Sigmoid colon (tissue), 7 donors: ENCODE measurements at regions of chr16 and their contacts with region 1.

Region 1: DNA sequence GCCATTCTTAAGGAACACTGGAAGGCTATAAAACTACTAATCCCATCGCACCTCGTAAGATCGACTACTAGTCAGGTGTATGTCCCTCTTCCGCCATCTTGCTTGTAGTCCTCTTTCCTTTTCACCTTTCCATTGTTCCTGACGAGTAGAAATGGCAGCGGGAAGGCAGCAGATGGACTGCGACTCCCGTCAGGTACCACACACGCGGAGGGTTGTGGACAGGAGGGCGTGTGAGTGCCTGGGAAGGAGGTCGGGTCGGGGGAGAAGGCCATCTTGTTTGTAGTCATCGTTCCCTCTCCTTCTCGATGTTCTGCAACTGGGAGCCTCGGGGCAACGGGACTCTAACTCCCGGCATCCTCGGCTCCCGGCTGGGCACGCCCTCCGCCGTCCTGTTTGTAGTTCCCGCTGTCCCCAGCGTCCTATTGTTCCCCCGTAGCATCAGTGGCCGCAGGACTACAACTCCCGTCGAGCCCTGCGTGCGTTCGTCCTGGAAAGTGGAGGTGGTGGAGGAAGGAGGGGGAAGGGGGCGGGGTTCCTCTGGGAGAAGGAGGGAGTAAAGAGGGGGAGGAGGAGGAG is 324 bp upstream of the FBXL19 start:
- DNase-seq: peak; percentile 100
- H3K4me3 ChIP-seq: peak overlapping the region; percentile 69 to 90 (median 80)
- H3K27ac ChIP-seq: peak overlapping the region; percentile 87 to 95 (median 92)
- H3K4me1 ChIP-seq: peaks cover 0 to 40% (median 37%) of the 10 kb centered on the region in 4 donors
- H3K27me3 ChIP-seq: no peaks in the 10 kb centered on the region
- CTCF ChIP-seq: no peak
- EP300 ChIP-seq: no peak
- POLR2A ChIP-seq: no peak

Region 2: DNA sequence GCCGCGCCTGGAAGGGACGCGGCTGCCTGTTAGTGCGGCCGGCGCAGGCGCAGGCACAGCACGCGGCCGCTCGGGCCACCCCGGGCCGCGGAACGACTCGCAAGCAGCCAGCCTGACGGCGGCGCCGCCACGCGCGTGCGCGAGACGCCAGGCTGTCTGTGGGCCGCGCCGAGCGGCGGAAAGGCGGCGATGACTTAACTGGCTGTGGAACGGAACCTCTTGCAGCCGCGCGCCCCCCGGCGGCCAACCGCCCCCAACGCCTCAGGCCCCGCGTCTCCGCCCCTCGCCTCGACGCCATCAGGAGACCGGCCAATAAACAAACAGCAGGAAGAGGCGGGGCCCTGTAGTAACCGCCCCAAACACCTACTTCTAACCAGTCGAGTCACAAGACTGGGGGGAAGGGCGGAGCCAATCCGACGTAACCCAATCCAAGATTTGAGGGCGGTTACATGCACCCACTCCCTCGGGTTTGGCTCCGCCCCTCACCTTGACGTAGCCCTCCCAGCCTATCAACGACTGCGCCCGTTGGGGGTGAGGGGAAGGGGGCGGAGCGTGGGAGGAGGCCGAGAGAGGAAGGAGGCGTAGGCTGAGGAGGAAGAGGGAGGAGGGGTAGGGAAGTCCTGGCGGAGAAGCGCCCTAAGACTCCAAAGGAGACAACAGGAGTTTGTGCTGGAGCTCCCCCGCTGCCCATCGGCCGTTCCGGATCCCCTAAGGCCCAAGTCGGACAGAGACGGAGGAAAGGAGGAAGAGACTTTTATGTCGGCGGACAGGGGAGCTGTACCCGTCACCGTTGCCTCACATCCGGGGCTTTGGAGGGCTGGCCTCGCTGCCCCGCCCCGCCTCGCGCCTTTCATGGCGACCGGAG is 264.9 kb before region 1 on chr16 and contains the start of gene FBRS:
- intact Hi-C with region 1: loop called (anchors 10 kb)
- DNase-seq: peak; percentile 100
- H3K4me3 ChIP-seq: peak within 1 kb of the TSS; percentile 91 to 99 (median 97)
- H3K27ac ChIP-seq: peak within 1 kb of the TSS; percentile 96 to 98 (median 97)
- H3K4me1 ChIP-seq: peaks cover 0 to 58% (median 53%) of the 10 kb centered on the region in 4 donors
- H3K27me3 ChIP-seq: no peaks in the 10 kb centered on the region
- CTCF ChIP-seq: peak in 3 of 4 experiments; percentile 8 to 66 (median 38)
- EP300 ChIP-seq: peak in 2 of 4 donors; percentile 49 to 52
- POLR2A ChIP-seq: peak; percentile 78 to 94
- total RNA-seq, gene FBRS: 12.5 to 29.6 (median 22.7) TPM

Region 3: GRCh38 chr16:30698139-30698815 is 224.8 kb before region 1 on chr16:
- intact Hi-C with region 1: loop called (anchors 2 kb)
- DNase-seq: peak; percentile 98
- H3K4me3 ChIP-seq: peak overlapping the region; percentile 92 to 100 (median 100)
- H3K27ac ChIP-seq: peak overlapping the region; percentile 97 to 100 (median 100)
- H3K4me1 ChIP-seq: peaks cover 0 to 32% (median 23%) of the 10 kb centered on the region in 4 donors
- H3K27me3 ChIP-seq: no peaks in the 10 kb centered on the region
- CTCF ChIP-seq: no peak
- EP300 ChIP-seq: peak in 1 of 4 donors; percentile 48
- POLR2A ChIP-seq: peak; percentile 0 to 69

Region 4: DNA sequence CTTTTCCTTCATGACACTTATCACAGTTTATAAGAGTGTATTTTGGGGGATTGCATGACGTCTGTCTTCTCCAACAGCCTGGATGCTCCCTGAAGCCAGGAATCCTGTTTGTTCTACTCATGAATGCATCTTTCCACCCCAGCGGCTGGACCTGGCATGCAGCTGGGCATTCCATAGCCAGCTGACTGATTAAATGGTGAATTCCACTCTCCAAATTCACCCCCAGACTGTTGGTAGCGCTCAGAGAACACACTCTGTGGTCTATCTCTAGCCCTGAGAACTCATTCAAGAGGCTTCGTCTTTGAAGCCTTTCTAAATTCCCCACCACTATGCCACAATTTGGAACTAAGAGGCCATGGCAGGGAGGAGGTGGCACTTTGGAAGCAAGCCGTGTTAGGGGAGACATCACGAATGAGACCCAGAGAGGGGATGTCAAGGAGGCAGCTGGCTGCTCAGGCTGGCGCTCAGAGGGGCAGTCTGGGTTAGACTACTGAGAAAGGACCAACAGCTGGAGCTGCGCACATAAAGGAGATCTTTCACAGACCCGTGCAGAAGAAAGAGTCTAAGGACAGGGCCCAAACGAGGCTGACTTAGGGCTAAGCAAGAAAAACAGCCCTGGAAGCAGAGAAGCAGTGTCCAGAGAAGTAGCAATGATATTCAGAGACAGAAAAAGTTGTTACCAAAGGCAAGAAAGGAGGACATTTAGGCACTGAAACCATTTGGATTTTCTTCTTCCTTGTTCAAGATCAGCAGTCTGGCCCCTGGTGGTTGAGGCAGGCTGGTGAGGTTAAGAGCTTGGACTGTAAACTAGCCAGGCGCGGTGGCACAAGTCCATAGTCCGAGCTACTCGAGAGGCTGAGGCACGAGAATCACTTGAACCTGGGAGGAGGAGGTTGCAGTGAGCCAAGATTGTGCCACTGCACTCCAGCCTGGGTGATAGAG is 93.6 kb before region 1 on chr16:
- intact Hi-C with region 1: no loop called
- DNase-seq: no peak
- H3K4me3 ChIP-seq: no peak overlapping the region
- H3K27ac ChIP-seq: no peak overlapping the region
- H3K4me1 ChIP-seq: no peaks in the 10 kb centered on the region
- H3K27me3 ChIP-seq: no peaks in the 10 kb centered on the region
- CTCF ChIP-seq: peak in 1 of 4 experiments; percentile 17
- EP300 ChIP-seq: no peak
- POLR2A ChIP-seq: no peak

Region 5: DNA sequence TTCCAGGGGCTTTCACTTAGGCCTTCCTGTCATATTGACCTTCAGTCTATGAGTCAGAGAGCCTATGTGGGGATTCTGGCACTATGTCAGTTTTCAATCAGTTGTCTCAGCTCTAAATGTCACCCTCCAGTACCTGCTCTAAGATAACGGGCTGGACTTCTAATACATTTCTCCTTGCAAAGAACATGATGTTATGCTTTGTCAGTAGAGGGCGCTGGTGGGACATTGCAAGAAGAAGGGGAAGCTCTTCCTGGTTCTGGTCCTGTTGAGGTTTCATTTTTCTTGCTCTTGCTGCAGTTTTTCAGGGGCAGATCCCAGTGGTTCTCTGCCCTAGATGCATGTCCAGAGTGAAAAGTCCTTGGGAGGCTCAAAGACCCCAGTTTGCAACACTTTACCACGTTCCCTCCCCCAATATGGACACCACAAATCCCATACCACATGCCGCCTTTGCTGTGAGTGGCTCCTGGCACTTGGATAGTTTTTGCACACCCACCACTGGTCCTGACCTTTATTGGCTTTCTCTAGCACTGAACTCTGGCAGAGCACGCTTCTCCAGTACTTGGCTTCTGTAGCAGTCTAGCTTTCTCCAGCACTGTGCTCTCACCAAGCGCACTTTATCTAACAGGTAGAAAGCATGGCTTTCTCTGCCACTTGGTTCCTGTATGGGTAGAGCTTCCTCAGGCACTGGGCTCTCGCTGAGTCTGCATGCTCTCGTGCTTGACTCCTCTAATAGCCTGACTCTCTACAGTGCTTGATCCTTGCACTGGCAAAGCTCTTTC is 78.2 kb before region 1 on chr16:
- intact Hi-C with region 1: loop called (anchors 1 kb)
- DNase-seq: peak; percentile 82
- H3K4me3 ChIP-seq: peak overlapping the region in 3 of 4 donors; percentile 24 to 33 (median 30)
- H3K27ac ChIP-seq: peak overlapping the region; percentile 46 to 75 (median 70)
- H3K4me1 ChIP-seq: peaks cover 0 to 10% (median 8%) of the 10 kb centered on the region in 4 donors
- H3K27me3 ChIP-seq: no peaks in the 10 kb centered on the region
- CTCF ChIP-seq: peak; percentile 82 to 94 (median 90)
- EP300 ChIP-seq: no peak
- POLR2A ChIP-seq: no peak

Region 6: GRCh38 chr16:30874821-30875717 is 48.0 kb before region 1 on chr16:
- intact Hi-C with region 1: loop called (anchors 1 kb)
- DNase-seq: peak; percentile 94
- H3K4me3 ChIP-seq: peak overlapping the region; percentile 84 to 94 (median 90)
- H3K27ac ChIP-seq: peak overlapping the region; percentile 94
- H3K4me1 ChIP-seq: peaks cover 0 to 30% (median 24%) of the 10 kb centered on the region in 4 donors
- H3K27me3 ChIP-seq: no peaks in the 10 kb centered on the region
- CTCF ChIP-seq: no peak
- EP300 ChIP-seq: no peak
- POLR2A ChIP-seq: peak; percentile 77 to 80

Region 7: DNA sequence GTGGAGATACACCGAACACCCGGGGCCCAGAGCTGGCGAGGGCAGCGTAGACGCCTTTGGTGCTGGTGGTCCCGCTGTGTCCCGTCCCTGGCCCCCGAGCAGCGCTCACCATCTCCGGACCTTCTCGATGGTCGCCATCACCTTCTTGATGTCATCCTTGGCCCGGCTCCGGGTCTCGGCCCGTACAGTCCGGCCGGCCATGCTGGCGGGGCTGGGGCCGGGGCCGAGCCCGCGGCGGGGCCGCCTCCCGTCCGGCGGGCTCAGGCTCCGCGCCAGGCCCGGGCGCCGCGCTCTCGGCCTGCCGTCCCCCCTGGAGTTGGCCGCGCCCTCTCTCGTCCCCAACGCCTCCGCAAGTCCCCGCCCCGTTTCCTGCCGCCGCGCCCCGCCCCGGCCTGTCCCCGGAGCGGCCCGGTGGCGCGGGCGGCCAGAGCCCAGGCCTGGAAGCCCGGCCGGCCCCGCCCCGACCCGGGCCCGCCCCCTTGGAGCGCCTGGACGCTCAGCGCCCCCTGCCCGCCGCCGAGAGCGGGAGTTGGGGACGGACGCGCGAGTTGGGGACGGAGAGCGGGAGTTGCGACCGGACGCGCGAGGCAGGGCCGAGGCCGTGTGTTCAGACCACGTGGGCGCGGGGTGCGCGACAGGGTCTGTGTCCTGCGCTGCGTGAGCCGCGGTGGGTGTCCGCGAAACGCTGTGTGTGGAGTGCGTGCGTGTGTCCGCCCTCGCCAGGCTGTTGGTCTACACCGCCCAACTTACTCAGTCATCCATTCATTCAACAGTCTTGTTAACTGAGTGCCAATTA is 29.1 kb before region 1 on chr16 and contains the start of gene BCL7C:
- intact Hi-C with region 1: loop called (anchors 2 kb)
- DNase-seq: peak; percentile 95
- H3K4me3 ChIP-seq: peak within 1 kb of the TSS; percentile 74 to 94 (median 86)
- H3K27ac ChIP-seq: peak within 1 kb of the TSS; percentile 95 to 99 (median 98)
- H3K4me1 ChIP-seq: peaks cover 0 to 48% (median 39%) of the 10 kb centered on the region in 4 donors
- H3K27me3 ChIP-seq: no peaks in the 10 kb centered on the region
- CTCF ChIP-seq: peak in 3 of 4 experiments; percentile 7 to 30 (median 15)
- EP300 ChIP-seq: no peak
- POLR2A ChIP-seq: no peak
- total RNA-seq, gene BCL7C: 45.7 to 63.1 (median 55.2) TPM

Region 8: GRCh38 chr16:30948667-30949649 is 25.9 kb after region 1 on chr16 and contains the start of gene ORAI3:
- intact Hi-C with region 1: loop called (anchors 2 kb)
- DNase-seq: peak; percentile 91
- H3K4me3 ChIP-seq: peak within 1 kb of the TSS; percentile 75 to 96 (median 86)
- H3K27ac ChIP-seq: peak within 1 kb of the TSS; percentile 86 to 98 (median 93)
- H3K4me1 ChIP-seq: peaks cover 0 to 50% (median 48%) of the 10 kb centered on the region in 4 donors
- H3K27me3 ChIP-seq: no peaks in the 10 kb centered on the region
- CTCF ChIP-seq: no peak
- EP300 ChIP-seq: no peak
- POLR2A ChIP-seq: peak; percentile 27 to 67
- total RNA-seq, gene ORAI3: 33.3 to 43.3 (median 40.5) TPM

Region 9: GRCh38 chr16:30977502-30977901 is 54.5 kb after region 1 on chr16:
- intact Hi-C with region 1: no loop called
- DNase-seq: no peak
- H3K4me3 ChIP-seq: no peak overlapping the region
- H3K27ac ChIP-seq: no peak overlapping the region
- H3K4me1 ChIP-seq: no peaks in the 10 kb centered on the region
- H3K27me3 ChIP-seq: no peaks in the 10 kb centered on the region
- CTCF ChIP-seq: no peak
- EP300 ChIP-seq: no peak
- POLR2A ChIP-seq: no peak